ENCODE measurements at regions of chr9 and their contacts with region 1.

Region 1: GRCh38 chr9:68999393-69000105 is 14.4 kb downstream of the PRKACG start:
- DNase-seq: peak; percentile 45
- H3K4me3 ChIP-seq: no peak overlapping the region
- CTCF ChIP-seq: peak; percentile 94

Region 2: DNA sequence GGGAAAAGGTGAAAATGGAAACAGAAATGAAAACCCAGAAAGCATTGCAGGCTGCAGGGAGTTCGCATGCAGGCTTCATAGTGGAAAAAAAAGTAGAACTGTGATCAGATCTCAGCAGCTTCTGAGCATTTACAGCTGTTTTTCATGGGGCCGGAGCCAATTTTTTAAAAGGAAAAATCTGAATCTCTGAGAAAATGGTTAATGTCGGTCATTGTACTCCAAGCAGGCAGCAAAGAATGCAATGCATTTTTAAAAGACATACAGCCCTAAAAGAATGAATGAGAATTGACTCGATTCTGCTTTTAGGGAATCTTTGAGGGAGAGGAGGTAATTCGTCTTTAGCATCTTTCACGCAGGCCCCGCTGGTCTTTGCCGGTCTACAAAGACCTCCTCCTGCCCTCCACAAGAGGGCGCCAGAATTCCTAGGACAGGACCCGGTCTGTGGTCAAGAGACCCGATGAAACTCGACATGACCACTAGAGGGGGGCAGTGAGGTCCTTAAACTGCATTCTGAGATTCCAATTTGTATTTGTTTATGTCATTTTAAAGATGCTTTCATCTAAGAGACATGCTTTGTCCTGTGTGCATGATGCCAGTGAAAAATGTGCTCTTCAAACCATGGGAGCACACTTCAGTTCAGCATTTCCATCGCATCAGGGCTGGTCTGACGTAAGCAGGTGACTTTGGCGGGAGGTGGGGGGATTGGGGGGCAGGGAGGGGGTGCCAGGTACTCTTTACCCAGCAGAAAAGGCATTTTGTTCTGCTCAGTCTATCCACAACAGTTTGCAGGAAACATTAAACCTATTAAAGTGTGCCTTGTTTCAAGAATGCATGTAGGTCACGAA is 415.1 kb before region 1 on chr9:
- in situ Hi-C with region 1: loop called (anchors 25 kb)
- DNase-seq: peak; percentile 58
- H3K4me3 ChIP-seq: no peak overlapping the region
- CTCF ChIP-seq: peak; percentile 97

Region 3: GRCh38 chr9:69056191-69056815 is 56.8 kb after region 1 on chr9:
- in situ Hi-C with region 1: no loop called
- DNase-seq: no peak
- H3K4me3 ChIP-seq: no peak overlapping the region
- CTCF ChIP-seq: no peak

Region 4: GRCh38 chr9:69317894-69318293 is 318.3 kb after region 1 on chr9:
- in situ Hi-C with region 1: no loop called
- DNase-seq: no peak
- H3K4me3 ChIP-seq: no peak overlapping the region
- CTCF ChIP-seq: no peak